Posterior cingulate gyrus (tissue), 11 donors: ENCODE measurements at regions of chr1 and their contacts with region 1.

Region 1: GRCh38 chr1:43946236-43947060 is at the start of gene IPO13:
- DNase-seq: peak; percentile 95 to 100 (median 97)

Region 2: GRCh38 chr1:43974443-43975248 is 28.2 kb after region 1 on chr1 and contains the start of gene ATP6V0B:
- intact Hi-C with region 1: loop called (anchors 2 kb)
- DNase-seq: peak; percentile 97 to 100 (median 99)

Region 3: DNA sequence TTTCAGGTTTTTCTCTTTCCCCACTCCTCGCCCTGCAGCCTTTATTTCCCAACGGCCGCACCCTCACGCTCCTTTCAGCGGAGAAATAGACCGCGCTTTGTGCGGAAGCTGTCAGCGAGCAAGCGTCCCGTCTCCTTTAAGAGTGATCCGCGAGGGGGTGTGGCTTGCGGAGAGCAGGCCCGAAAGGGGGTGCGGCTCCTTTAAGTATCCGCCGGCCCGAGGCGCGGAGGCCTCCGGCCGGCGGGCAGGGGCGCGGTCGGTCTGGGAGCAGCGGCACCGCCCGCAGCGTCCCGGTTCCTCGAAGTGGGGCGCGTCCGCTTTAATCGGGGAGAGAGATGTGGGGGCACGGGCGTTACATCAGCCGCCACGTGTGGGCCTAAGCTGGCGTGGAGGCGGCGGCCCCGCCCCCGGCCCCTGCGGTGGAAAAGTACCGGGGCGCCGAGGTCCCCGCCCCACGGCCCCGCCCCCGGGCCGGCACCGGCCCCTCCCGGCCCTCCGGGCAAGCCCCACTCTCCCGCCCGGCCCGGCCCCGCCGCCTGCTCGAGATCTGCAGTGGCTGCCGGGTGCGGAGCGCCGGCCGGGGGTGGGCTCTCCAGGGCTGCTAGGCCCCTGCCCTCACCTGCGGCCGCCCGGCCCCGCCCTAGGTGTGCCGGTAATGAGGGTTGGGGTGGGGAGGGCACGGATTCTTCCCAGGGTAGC is 83.6 kb after region 1 on chr1:
- intact Hi-C with region 1: loop called (anchors 10 kb)
- DNase-seq: peak; percentile 74 to 98 (median 86)